ENCODE measurements at regions of chr5 and their contacts with region 1.

Region 1: GRCh38 chr5:96614110-96614691 is 48.0 kb upstream of the CAST start:
- DNase-seq: no peak
- ATAC-seq: peak; percentile 50
- H3K4me3 Mint-ChIP-seq: no peak overlapping the region
- H3K27ac Mint-ChIP-seq: no peak overlapping the region
- H3K4me1 Mint-ChIP-seq: peaks cover 4% of the 10 kb centered on the region
- H3K27me3 Mint-ChIP-seq: peaks cover 13% of the 10 kb centered on the region
- CTCF ChIP-seq: peak; percentile 22

Region 2: DNA sequence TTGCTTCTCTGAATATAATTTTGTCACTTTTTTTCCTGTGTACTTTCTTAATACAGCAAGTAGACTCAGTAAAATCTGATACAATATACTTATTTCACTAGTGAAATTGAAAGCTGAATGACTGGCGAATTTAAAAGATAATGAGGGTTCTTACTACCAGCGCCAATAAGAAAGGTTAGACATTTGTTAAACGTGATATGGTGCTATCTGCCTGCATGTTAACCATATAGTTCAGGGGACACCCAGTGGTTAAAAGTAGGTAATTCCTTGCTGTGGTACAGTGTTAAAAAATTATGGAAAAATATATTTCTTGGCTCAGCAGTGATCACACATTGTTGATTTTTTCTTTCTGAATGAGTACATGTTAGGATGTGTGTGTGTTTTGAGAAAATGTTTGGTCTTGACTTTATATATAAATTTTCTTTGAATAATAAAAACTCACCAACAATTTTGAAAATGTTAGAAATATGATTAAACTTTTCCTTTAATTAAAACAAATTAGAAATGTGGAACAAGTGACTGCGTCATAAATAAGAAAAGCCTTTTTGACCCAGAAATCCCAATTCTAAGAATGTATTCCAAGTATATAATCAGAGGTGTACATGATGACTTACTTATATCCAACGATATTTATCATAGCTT is 73.7 kb after region 1 on chr5:
- CTCF ChIA-PET with region 1: interaction called, 22 read pairs
- POLR2A ChIA-PET with region 1: no interaction called
- intact Hi-C with region 1: loop called (anchors 1 kb)
- DNase-seq: no peak
- ATAC-seq: peak; percentile 71
- H3K4me3 Mint-ChIP-seq: no peak overlapping the region
- H3K27ac Mint-ChIP-seq: no peak overlapping the region
- H3K4me1 Mint-ChIP-seq: peaks cover 25% of the 10 kb centered on the region
- H3K27me3 Mint-ChIP-seq: no peaks in the 10 kb centered on the region
- CTCF ChIP-seq: no peak

Region 3: GRCh38 chr5:96729156-96729555 is 115.0 kb after region 1 on chr5:
- CTCF ChIA-PET with region 1: interaction called, 21 read pairs
- POLR2A ChIA-PET with region 1: no interaction called
- intact Hi-C with region 1: loop called (anchors 1 kb)
- DNase-seq: no peak
- ATAC-seq: no peak
- H3K4me3 Mint-ChIP-seq: no peak overlapping the region
- H3K27ac Mint-ChIP-seq: no peak overlapping the region
- H3K4me1 Mint-ChIP-seq: peaks cover 3% of the 10 kb centered on the region
- H3K27me3 Mint-ChIP-seq: no peaks in the 10 kb centered on the region
- CTCF ChIP-seq: no peak

Region 4: DNA sequence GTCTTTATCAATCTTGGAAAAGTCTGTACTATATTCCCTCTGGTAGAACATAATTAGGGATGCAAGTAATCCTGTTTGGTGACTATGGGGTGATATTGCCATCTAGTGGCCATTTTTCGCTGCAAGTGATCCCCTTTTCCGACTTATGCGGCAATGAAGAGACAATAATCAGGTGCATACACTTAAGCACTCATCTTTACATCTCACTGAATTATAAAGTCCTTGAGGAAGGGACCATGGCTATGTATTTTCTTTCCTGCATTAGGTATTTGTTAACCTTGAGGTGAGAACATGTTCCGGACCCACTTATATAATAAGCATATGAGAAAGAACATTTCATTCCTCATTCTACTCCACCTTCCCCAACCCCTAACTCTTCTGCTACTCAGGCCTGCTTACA is 547.8 kb after region 1 on chr5:
- CTCF ChIA-PET with region 1: interaction called, 10 read pairs
- POLR2A ChIA-PET with region 1: no interaction called
- intact Hi-C with region 1: loop called (anchors 1 kb)
- DNase-seq: no peak
- ATAC-seq: peak; percentile 31
- H3K4me3 Mint-ChIP-seq: no peak overlapping the region
- H3K27ac Mint-ChIP-seq: no peak overlapping the region
- H3K4me1 Mint-ChIP-seq: peaks cover 3% of the 10 kb centered on the region
- H3K27me3 Mint-ChIP-seq: no peaks in the 10 kb centered on the region
- CTCF ChIP-seq: peak; percentile 68